ENCODE measurements at regions of chr17 and their contacts with region 1.

Region 1: GRCh38 chr17:3865176-3865575 is 19.1 kb upstream of the NCBP3 start:
- DNase-seq: no peak
- H3K4me3 Mint-ChIP-seq: no peak overlapping the region
- H3K27ac Mint-ChIP-seq: no peak overlapping the region
- H3K4me1 Mint-ChIP-seq: no peaks in the 10 kb centered on the region
- H3K27me3 Mint-ChIP-seq: no peaks in the 10 kb centered on the region

Region 2: GRCh38 chr17:3788200-3788599 is 77.0 kb before region 1 on chr17:
- CTCF ChIA-PET with region 1: no interaction called
- DNase-seq: peak; percentile 33
- H3K4me3 Mint-ChIP-seq: no peak overlapping the region
- H3K27ac Mint-ChIP-seq: peak overlapping the region; percentile 28
- H3K4me1 Mint-ChIP-seq: peaks cover 34% of the 10 kb centered on the region
- H3K27me3 Mint-ChIP-seq: peaks cover 7% of the 10 kb centered on the region

Region 3: DNA sequence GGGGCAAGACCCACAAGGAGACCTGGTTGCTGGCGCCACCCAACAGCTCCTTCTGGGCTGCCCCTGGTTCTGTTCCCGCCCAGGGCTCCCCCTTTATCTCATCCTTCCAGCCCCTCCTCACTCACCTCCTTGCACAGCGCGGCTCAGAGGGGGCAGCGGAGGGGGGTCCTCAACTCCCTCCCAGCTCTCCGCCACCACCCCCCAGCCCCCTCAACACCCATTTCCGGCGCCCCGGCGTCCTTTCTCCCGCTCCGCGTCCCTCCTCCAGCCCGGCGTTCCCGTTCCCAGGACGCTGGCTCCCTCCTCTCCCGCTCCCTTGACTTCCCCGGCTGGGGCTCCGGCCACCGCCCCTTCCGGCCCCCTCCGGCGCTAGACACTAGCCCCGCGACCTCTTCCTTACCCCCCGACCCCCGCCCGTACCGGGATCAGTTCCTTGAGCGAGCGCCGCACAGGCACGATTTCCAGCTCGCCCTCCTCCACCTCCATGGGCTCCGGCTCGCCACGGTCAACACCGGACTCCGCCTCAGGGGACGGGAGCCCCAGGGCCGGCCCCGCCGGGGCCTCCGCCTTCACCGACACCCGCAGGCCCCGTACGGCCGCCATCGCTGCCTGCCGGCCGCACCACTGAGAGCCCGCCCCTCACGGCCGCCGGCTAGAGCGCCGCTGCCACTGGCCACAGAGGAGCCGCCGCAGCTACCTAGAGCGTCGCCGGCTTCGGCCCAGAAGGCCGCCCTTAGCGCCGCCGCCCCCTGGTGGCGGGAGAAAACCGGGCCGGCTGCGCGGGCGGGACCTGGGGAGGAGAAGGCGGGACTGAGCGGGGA is 19.3 kb before region 1 on chr17 and contains the start of gene NCBP3:
- CTCF ChIA-PET with region 1: interaction called, 11 read pairs
- DNase-seq: peak; percentile 89
- H3K4me3 Mint-ChIP-seq: peak within 1 kb of the TSS; percentile 95
- H3K27ac Mint-ChIP-seq: peak within 1 kb of the TSS; percentile 91
- H3K4me1 Mint-ChIP-seq: peaks cover 26% of the 10 kb centered on the region
- H3K27me3 Mint-ChIP-seq: peaks cover 37% of the 10 kb centered on the region

Region 4: DNA sequence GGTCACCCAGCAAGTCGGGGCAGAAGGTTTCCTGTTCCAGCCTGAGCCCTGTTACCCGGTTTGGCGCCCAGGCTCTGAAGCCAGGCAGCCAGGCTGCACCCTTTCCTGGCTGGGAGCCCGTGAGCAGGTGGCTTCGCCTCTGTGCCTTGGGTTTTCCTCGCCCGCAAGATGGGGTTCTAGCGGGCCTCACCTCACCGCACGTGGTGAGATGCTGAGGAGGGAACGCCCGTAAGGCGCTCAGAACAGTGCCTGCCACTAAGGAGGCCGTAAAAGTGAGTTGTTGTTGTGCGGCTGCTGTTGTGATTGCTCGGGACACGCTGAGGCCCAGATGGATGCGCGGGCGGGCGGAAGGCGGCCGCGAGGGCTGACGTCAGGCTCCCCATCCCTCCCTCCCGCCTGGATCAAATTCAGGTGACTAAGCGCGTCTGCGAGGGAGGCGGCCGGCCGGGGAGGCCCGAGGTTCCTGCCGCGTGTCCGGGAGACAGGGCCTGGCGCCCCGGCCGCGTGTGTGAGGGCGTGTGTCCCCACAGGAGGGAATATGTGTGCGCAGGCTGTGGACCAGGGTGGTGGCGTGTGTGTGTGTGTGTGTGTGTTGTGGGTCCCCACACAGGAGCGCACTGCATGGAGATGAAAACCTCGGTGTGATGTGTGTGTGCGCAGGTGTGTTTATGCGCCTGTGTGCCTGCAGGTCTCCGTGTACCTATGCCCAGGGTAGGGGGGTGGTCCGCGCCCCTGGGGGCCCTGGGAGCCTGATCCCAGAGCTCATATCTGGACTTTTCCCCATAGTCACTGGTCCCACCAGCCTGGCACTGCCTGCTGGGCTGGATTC is 23.4 kb after region 1 on chr17:
- CTCF ChIA-PET with region 1: no interaction called
- DNase-seq: no peak
- H3K4me3 Mint-ChIP-seq: no peak overlapping the region
- H3K27ac Mint-ChIP-seq: no peak overlapping the region
- H3K4me1 Mint-ChIP-seq: peaks cover 42% of the 10 kb centered on the region
- H3K27me3 Mint-ChIP-seq: peaks cover 26% of the 10 kb centered on the region

Measured in activated naive CD4-positive, alpha-beta T cell treated with anti-CD3 and anti-CD28 coated beads, Interleukin-2, amount 10 ng/mL, durations not matched to agents 7 days and 5 days (primary cell).